ENCODE measurements at regions of chr4 and their contacts with region 1.

Region 1: GRCh38 chr4:37977471-37978247 is 17.5 kb downstream of the PTTG2 start:
- DNase-seq: peak; percentile 47 to 68
- ATAC-seq: peak; percentile 76 to 89
- H3K4me3 ChIP-seq: peak overlapping the region; percentile 63 to 83 (median 64)
- H3K27ac ChIP-seq: peak overlapping the region; percentile 79 to 92 (median 85)
- H3K4me1 ChIP-seq: peaks cover 24 to 30% of the 10 kb centered on the region in 2 donors
- H3K27me3 ChIP-seq: no peaks in the 10 kb centered on the region
- CTCF ChIP-seq: peak; percentile 62 to 86 (median 78)
- POLR2A ChIP-seq: peak; percentile 25 to 54

Region 2: GRCh38 chr4:37603070-37603468 is 374.6 kb before region 1 on chr4:
- in situ Hi-C with region 1: no loop called
- intact Hi-C with region 1: loop called (anchors 2 kb)
- DNase-seq: peak; percentile 63 to 78
- ATAC-seq: peak; percentile 84 to 93
- H3K4me3 ChIP-seq: no peak overlapping the region
- H3K27ac ChIP-seq: no peak overlapping the region
- H3K4me1 ChIP-seq: no peaks in the 10 kb centered on the region
- H3K27me3 ChIP-seq: no peaks in the 10 kb centered on the region
- CTCF ChIP-seq: peak; percentile 95 to 99 (median 98)
- POLR2A ChIP-seq: no peak

Region 3: GRCh38 chr4:37767546-37767945 is 210.1 kb before region 1 on chr4:
- in situ Hi-C with region 1: no loop called
- intact Hi-C with region 1: no loop called
- DNase-seq: peak; percentile 18 to 47
- ATAC-seq: peak in 1 of 2 donors; percentile 19
- H3K4me3 ChIP-seq: no peak overlapping the region
- H3K27ac ChIP-seq: no peak overlapping the region
- H3K4me1 ChIP-seq: no peaks in the 10 kb centered on the region
- H3K27me3 ChIP-seq: no peaks in the 10 kb centered on the region
- CTCF ChIP-seq: no peak
- POLR2A ChIP-seq: no peak

Region 4: DNA sequence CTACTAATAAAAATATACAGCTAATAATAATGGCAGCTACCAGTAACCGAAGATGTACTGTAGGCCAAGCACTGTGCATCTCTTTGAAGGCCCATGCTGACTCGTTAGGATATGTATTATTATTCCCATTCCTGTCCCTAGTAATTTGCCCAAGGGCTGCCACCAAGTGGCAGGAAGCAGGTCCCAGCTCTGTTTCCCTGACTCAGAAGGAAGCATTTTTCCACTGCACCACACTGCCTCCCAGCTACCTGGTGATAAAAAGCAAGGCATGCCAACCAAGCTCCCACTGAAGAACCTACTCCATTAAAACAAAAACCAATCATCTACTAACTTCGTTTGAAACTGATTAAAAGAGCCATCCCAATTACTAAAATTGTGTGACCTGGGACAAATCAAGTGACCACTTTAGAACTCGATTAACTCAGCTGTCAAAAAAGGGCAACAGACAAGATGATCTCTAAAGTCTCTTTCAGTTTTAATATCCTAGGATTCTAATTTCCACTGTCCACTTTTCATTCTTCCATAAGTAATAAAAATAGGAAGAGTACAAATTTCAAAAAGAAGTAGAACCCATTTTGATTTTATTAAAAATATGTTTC is 175.5 kb before region 1 on chr4:
- in situ Hi-C with region 1: no loop called
- intact Hi-C with region 1: loop called (anchors 1 kb)
- DNase-seq: peak in 1 of 2 donors; percentile 57
- ATAC-seq: peak; percentile 73 to 92
- H3K4me3 ChIP-seq: no peak overlapping the region
- H3K27ac ChIP-seq: no peak overlapping the region
- H3K4me1 ChIP-seq: peaks cover 12 to 15% of the 10 kb centered on the region in 2 donors
- H3K27me3 ChIP-seq: no peaks in the 10 kb centered on the region
- CTCF ChIP-seq: peak in 4 of 5 experiments; percentile 51 to 73 (median 56)
- POLR2A ChIP-seq: no peak

Region 5: DNA sequence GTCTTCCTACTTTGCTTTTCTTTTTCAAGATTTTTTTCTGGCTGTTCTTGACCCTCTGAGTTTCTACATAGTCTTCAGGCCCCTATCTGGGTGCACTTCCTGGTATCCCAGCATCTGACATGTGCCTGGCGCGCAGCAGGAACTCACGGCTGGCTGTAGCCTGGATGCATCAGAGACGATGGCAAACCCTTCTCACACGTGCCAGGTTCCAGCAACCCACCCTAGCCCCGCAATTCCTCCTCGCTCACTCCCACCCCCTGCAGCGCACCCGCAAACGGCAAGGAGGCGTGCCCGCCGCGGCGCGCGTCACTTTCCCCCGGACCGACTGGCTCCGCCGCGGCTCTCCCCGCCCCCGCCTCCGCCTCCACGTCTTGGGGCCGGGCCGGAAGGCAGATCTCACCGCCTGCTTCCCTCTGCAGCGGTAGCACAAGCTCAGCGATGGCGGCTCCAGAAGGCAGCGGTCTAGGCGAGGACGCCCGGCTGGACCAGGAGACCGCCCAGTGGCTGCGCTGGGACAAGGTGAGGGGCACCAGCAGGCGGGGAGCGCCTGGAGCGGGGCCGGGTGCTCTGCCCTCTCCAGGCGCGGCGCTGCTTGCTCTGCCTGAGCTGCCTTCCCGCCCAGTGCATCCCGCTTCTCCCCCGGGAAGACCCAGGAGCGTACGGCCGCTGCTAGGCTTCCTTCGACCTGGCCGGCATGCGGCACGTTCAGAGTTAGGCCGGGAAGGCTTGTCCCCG is 151.2 kb before region 1 on chr4 and contains the start of gene PGM2:
- in situ Hi-C with region 1: no loop called
- intact Hi-C with region 1: loop called (anchors 5 kb)
- DNase-seq: peak; percentile 59 to 62
- ATAC-seq: peak; percentile 89 to 90
- H3K4me3 ChIP-seq: peak within 1 kb of the TSS; percentile 67 to 88 (median 78)
- H3K27ac ChIP-seq: peak within 1 kb of the TSS; percentile 60 to 76 (median 74)
- H3K4me1 ChIP-seq: peaks cover 10 to 11% of the 10 kb centered on the region in 2 donors
- H3K27me3 ChIP-seq: no peaks in the 10 kb centered on the region
- CTCF ChIP-seq: peak in 1 of 5 experiments; percentile 40
- POLR2A ChIP-seq: peak; percentile 55 to 76
- total RNA-seq, gene PGM2: 0.92 to 3.7 (median 2.1) TPM

Region 6: DNA sequence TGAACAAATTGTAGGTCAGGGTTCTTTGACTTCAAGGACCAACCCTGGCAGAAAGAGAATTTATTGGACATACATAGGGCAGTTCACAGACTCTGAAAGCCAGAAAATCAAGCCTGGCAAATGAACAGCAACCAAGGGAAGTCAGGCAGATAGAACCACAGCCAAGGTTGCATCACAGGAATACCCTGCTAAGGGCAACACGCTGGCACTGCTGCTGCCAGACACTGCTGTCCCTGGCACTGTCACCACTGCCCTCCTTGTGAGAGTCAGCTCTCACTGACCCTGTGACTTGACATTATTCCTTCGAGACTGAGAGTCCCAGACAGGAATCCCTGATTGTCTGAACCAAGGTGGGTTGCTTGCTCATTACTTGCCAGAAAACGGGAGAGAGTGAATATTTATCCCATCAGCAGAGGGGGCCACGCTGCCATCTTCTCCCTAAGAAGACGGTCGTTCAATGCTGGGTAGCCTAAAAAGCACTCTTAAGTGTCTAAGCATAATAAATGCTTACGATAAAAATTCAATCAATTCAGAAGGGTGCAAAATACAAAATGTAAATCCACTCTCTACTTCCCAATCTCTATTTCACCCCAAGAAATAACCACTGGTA is 40.7 kb before region 1 on chr4:
- in situ Hi-C with region 1: no loop called
- intact Hi-C with region 1: loop called (anchors 2 kb)
- DNase-seq: peak; percentile 91 to 96
- ATAC-seq: peak; percentile 78 to 79
- H3K4me3 ChIP-seq: peak overlapping the region; percentile 18 to 28 (median 24)
- H3K27ac ChIP-seq: peak overlapping the region; percentile 83 to 97 (median 88)
- H3K4me1 ChIP-seq: peaks cover 50 to 58% of the 10 kb centered on the region in 2 donors
- H3K27me3 ChIP-seq: no peaks in the 10 kb centered on the region
- CTCF ChIP-seq: no peak
- POLR2A ChIP-seq: peak; percentile 53 to 76

Region 7: GRCh38 chr4:38663801-38664705 is 686.4 kb after region 1 on chr4 and contains the start of gene KLF3:
- in situ Hi-C with region 1: no loop called
- intact Hi-C with region 1: loop called (anchors 10 kb)
- DNase-seq: peak; percentile 88 to 92
- ATAC-seq: peak; percentile 65 to 70
- H3K4me3 ChIP-seq: peak within 1 kb of the TSS; percentile 94 to 99 (median 98)
- H3K27ac ChIP-seq: peak within 1 kb of the TSS; percentile 97 to 100 (median 98)
- H3K4me1 ChIP-seq: peaks cover 38 to 44% of the 10 kb centered on the region in 2 donors
- H3K27me3 ChIP-seq: no peaks in the 10 kb centered on the region
- CTCF ChIP-seq: no peak
- POLR2A ChIP-seq: peak; percentile 93 to 95
- total RNA-seq, gene KLF3: 12.7 to 26.5 (median 19.4) TPM